Posterior cingulate gyrus (tissue), 11 donors: ENCODE measurements at regions of chr16 and their contacts with region 1.

Region 1: GRCh38 chr16:63289852-63290460 is 1253.7 kb upstream of the CDH8 start:
- DNase-seq: peak in 8 of 10 donors; percentile 36 to 90 (median 57)

Region 2: GRCh38 chr16:62190426-62190825 is 1099.5 kb before region 1 on chr16:
- intact Hi-C with region 1: loop called (anchors 5 kb)
- DNase-seq: no peak

Region 3: GRCh38 chr16:62870554-62870953 is 419.4 kb before region 1 on chr16:
- intact Hi-C with region 1: loop called (anchors 10 kb)
- DNase-seq: no peak

Region 4: DNA sequence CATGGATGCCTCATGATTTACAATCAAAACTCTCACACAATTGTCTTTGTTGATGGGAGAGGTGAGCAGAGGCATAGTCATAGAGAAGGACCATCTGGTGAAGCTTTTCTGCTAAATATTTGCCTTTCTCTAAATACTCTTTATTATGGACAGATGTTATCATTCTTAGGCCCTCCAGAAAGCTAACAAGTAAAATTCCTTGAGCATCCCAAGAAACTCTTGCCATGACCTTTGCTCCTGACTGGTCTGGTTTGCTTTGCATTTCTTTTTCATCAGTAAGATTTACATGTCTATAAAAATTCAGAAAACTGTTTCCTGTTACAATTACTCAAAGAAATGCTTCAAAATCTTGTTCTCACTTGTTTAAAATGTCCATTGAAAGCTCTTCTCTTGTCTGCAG is 82.9 kb after region 1 on chr16:
- intact Hi-C with region 1: no loop called
- DNase-seq: no peak